Cardiac septum (tissue), 1 donor: ENCODE measurements at regions of chr3 and their contacts with region 1.

Region 1: DNA sequence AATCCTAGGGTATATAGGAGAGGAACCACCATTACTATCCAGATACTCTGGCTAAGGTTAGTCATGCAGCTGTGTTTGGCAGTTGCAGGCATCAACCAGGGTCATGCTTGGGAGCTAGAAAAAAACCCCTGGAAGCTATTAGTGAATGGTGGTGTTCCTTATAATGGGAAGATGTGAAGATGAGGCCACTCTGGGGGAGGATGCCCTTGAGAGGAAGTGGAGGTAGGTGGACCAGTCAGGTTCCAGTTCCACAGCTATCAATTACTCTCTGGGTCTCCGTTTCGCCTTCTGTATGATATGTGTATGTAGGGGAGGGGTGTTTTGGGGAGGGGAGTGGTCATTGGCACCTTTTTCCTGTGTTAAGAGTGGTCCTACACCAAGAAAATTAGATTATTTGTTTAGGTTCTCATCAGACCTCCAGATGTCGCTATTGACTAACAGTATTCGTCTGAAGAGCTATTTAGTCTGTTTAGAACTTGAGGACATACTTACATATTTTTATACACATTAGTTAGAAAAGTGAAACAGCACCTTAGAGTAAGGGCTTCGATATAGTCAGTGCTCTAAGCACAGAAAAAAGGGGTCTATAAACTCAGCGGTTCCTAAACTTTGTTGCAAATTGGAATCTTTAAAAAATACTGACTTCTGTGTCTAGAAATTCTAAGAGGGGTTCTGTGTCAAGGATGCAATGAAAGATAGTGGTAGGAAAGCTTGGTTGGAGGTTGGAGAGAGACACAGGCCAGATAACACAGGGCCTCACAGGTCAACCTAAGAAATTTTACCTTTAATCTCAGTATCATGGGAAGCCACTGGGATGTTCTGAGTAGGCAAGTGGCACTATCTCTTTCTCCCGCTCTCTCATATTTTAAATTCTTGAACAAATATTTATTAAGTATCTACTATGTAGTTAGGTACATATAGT is 9.1 kb upstream of the HPS3 start:
- DNase-seq: no peak

Region 2: DNA sequence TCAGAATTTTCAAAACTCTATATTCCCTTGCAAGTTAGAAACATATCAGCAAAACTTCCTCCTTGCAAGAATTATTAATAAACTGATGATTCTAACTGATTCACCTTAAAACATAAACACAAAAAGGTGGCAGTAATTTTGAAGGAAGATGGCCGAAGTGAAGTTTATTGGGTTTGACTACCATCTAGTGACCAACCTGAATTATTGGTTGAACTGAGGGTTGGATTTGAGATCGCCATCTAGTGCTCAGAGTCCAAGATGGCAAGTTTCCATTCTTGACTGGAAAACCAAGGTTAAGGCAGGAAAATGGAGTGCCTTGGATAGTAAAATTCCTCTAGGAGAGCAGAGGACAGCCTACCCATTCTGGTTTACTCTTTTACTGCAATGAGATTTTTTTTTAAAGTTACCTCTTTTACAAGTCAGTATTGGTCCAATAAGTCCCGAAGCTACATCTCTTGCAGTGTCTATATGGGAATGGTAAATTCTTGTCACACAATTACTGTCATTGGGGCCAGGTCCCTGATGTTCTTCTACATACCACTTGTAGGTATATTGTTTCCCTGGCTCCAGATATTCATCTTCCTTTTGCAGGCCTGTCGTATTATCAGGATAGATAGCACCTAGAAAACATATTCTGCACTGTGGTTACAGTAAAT is 152.9 kb after region 1 on chr3:
- intact Hi-C with region 1: loop called (anchors 1 kb)
- DNase-seq: no peak

Region 3: DNA sequence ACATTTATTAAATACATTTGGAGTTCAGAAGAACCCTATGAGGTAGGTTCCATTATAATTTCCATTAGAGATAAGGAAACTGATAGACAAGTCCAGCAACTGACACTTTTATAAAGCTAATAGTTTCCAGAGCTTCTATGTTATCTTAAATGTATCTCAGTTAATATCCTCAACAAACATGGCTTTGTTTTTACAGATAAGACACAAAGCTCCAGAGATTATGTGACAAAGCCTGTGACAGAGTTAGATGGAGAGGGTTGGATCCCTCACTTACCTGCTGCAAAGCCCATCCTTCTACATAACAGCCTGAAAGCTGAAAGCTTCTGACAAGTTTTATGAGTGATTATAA is 632.5 kb after region 1 on chr3:
- intact Hi-C with region 1: no loop called
- DNase-seq: no peak